Heart left ventricle (tissue), 16 donors: ENCODE measurements at regions of chr9 and their contacts with region 1.

Region 1: GRCh38 chr9:70340572-70340971 is 73.9 kb downstream of the KLF9 start:
- DNase-seq: no peak
- ATAC-seq: no peak
- H3K4me3 ChIP-seq: no peak overlapping the region
- H3K27ac ChIP-seq: no peak overlapping the region
- H3K4me1 ChIP-seq: peaks cover 0 to 3% (median 0%) of the 10 kb centered on the region in 12 donors
- H3K27me3 ChIP-seq: no peaks in the 10 kb centered on the region
- CTCF ChIP-seq: peak; percentile 40 to 70 (median 60)
- POLR2A ChIP-seq: no peak

Region 2: GRCh38 chr9:69971643-69972449 is 368.7 kb before region 1 on chr9:
- intact Hi-C with region 1: loop called in 1 of 10 experiments (anchors 10 kb)
- DNase-seq: peak; percentile 54 to 82 (median 71)
- ATAC-seq: peak; percentile 50 to 86 (median 76)
- H3K4me3 ChIP-seq: no peak overlapping the region
- H3K27ac ChIP-seq: no peak overlapping the region
- H3K4me1 ChIP-seq: peaks cover 0 to 10% (median 4%) of the 10 kb centered on the region in 12 donors
- H3K27me3 ChIP-seq: no peaks in the 10 kb centered on the region
- CTCF ChIP-seq: peak; percentile 67 to 94 (median 84)
- POLR2A ChIP-seq: no peak

Region 3: GRCh38 chr9:70285246-70285645 is 55.3 kb before region 1 on chr9:
- intact Hi-C with region 1: loop called in 1 of 10 experiments (anchors 10 kb)
- DNase-seq: no peak
- ATAC-seq: peak in 3 of 4 donors; percentile 73 to 83 (median 74)
- H3K4me3 ChIP-seq: no peak overlapping the region
- H3K27ac ChIP-seq: peak overlapping the region in 8 of 12 donors; percentile 3 to 60 (median 36)
- H3K4me1 ChIP-seq: peaks cover 0 to 24% (median 13%) of the 10 kb centered on the region in 12 donors
- H3K27me3 ChIP-seq: no peaks in the 10 kb centered on the region
- CTCF ChIP-seq: no peak
- POLR2A ChIP-seq: no peak

Region 4: GRCh38 chr9:70398145-70398556 is 57.6 kb after region 1 on chr9:
- intact Hi-C with region 1: loop called in 1 of 10 experiments (anchors 10 kb)
- DNase-seq: no peak
- ATAC-seq: peak; percentile 52 to 75 (median 66)
- H3K4me3 ChIP-seq: peak overlapping the region in 1 of 12 donors; percentile 6
- H3K27ac ChIP-seq: peak overlapping the region in 11 of 12 donors; percentile 6 to 72 (median 43)
- H3K4me1 ChIP-seq: peaks cover 45 to 99% (median 93%) of the 10 kb centered on the region in 12 donors
- H3K27me3 ChIP-seq: no peaks in the 10 kb centered on the region
- CTCF ChIP-seq: no peak
- POLR2A ChIP-seq: no peak